ENCODE measurements at regions of chr3 and their contacts with region 1.

Region 1: GRCh38 chr3:124905849-124906248 is 18.7 kb upstream of the ITGB5 start:
- DNase-seq: no peak
- H3K4me3 ChIP-seq: no peak overlapping the region
- H3K27ac ChIP-seq: no peak overlapping the region
- H3K4me1 ChIP-seq: no peaks in the 10 kb centered on the region
- H3K27me3 ChIP-seq: no peaks in the 10 kb centered on the region
- CTCF ChIP-seq: peak in 1 of 2 donors; percentile 1

Region 2: GRCh38 chr3:124688581-124689454 is 217.0 kb before region 1 on chr3:
- CTCF ChIA-PET with region 1: no interaction called
- dilution Hi-C with region 1: no loop called
- in situ Hi-C with region 1: no loop called
- intact Hi-C with region 1: loop called (anchors 1 kb)
- DNase-seq: peak; percentile 62
- H3K4me3 ChIP-seq: no peak overlapping the region
- H3K27ac ChIP-seq: no peak overlapping the region
- H3K4me1 ChIP-seq: peaks cover 17% of the 10 kb centered on the region
- H3K27me3 ChIP-seq: no peaks in the 10 kb centered on the region
- CTCF ChIP-seq: peak; percentile 82 to 85

Region 3: DNA sequence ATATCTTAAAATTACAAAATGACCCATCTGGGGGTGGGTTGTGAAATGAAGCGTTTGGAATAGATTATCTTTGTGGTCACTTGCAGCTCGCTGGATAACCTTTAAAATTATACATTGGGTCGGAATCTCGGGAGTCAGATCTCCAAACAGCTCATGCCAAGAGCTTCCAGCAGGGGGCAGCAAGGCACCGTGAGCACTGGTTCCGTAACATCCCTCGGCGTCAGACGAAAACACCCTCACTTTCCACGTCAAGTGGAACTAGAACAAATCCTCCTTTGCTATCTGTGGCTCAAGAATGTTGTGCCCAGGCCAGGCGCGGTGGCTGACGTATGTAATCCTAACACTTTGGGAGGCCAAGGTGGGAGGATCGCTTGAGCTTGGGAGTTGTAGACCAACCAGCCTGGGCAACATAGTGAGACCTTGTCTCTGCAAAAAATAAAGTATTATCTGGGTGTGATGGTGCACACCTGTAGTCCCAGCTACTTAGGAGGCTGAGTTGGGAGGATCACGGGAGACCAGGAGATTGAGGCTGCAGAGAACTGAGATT is 144.5 kb before region 1 on chr3:
- CTCF ChIA-PET with region 1: interaction called, 4 read pairs
- dilution Hi-C with region 1: no loop called
- in situ Hi-C with region 1: loop called (anchors 5 to 10 kb)
- intact Hi-C with region 1: loop called (anchors 1 kb)
- DNase-seq: peak; percentile 46
- H3K4me3 ChIP-seq: no peak overlapping the region
- H3K27ac ChIP-seq: no peak overlapping the region
- H3K4me1 ChIP-seq: no peaks in the 10 kb centered on the region
- H3K27me3 ChIP-seq: no peaks in the 10 kb centered on the region
- CTCF ChIP-seq: peak; percentile 95 to 98

Region 4: GRCh38 chr3:124768812-124769211 is 137.0 kb before region 1 on chr3:
- CTCF ChIA-PET with region 1: interaction called, 5 read pairs
- dilution Hi-C with region 1: no loop called
- in situ Hi-C with region 1: loop called (anchors 5 to 10 kb)
- intact Hi-C with region 1: loop called (anchors 2 kb)
- DNase-seq: peak; percentile 32
- H3K4me3 ChIP-seq: no peak overlapping the region
- H3K27ac ChIP-seq: no peak overlapping the region
- H3K4me1 ChIP-seq: no peaks in the 10 kb centered on the region
- H3K27me3 ChIP-seq: no peaks in the 10 kb centered on the region
- CTCF ChIP-seq: peak; percentile 34 to 47

Region 5: GRCh38 chr3:124786441-124787241 is 119.2 kb before region 1 on chr3:
- CTCF ChIA-PET with region 1: interaction called, 9 read pairs
- dilution Hi-C with region 1: no loop called
- in situ Hi-C with region 1: no loop called
- intact Hi-C with region 1: loop called (anchors 1 kb)
- DNase-seq: peak; percentile 6
- H3K4me3 ChIP-seq: no peak overlapping the region
- H3K27ac ChIP-seq: no peak overlapping the region
- H3K4me1 ChIP-seq: peaks cover 6% of the 10 kb centered on the region
- H3K27me3 ChIP-seq: no peaks in the 10 kb centered on the region
- CTCF ChIP-seq: peak; percentile 31 to 35